Tibial artery (tissue), 4 donors: ENCODE measurements at regions of chr2 and their contacts with region 1.

Region 1: GRCh38 chr2:147937744-147938349 is 82.7 kb downstream of the ORC4 start:
- DNase-seq: no peak
- H3K4me3 ChIP-seq: no peak overlapping the region
- H3K27ac ChIP-seq: no peak overlapping the region
- H3K4me1 ChIP-seq: no peaks in the 10 kb centered on the region
- H3K27me3 ChIP-seq: no peaks in the 10 kb centered on the region
- CTCF ChIP-seq: peak; percentile 74 to 84

Region 2: GRCh38 chr2:148509288-148509902 is 571.5 kb after region 1 on chr2:
- intact Hi-C with region 1: loop called (anchors 5 kb)
- DNase-seq: peak; percentile 81 to 92
- H3K4me3 ChIP-seq: peak overlapping the region; percentile 42 to 47
- H3K27ac ChIP-seq: peak overlapping the region in 1 of 2 donors; percentile 48
- H3K4me1 ChIP-seq: peaks cover 0 to 10% (median 0%) of the 10 kb centered on the region in 4 donors
- H3K27me3 ChIP-seq: no peaks in the 10 kb centered on the region
- CTCF ChIP-seq: peak; percentile 92 to 93

Region 3: DNA sequence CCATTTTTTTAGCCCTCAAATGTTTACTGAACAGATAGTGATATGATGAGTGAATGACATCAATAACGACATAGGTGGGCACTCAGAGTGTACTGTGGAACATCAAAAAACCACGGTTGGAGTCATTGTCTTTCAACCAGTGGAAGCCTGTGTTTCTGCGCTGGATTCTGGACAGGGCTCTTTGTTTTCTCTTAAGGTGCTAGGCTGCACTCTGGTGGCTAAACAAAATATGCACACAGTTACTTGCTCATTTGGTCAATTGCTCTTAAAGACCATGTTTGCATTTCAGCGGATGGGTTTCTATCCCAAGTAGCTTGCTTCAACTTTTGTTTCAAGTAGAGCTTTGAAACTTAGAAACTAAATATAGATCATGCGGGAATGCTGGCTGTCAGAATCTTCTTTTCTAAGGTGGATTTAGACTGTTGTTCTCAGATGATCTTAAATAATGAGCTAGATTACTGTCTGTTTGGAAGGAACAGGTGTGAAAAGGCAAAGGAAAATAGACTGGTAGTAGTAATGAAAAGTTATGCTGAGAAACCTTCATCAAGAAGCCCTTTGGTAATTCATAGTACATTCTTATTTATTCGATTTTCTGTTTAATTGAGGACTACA is 1052.1 kb after region 1 on chr2:
- intact Hi-C with region 1: loop called (anchors 10 kb)
- DNase-seq: peak in 1 of 2 donors; percentile 61
- H3K4me3 ChIP-seq: no peak overlapping the region
- H3K27ac ChIP-seq: no peak overlapping the region
- H3K4me1 ChIP-seq: no peaks in the 10 kb centered on the region
- H3K27me3 ChIP-seq: no peaks in the 10 kb centered on the region
- CTCF ChIP-seq: peak; percentile 72 to 73